PC-3 (cell line): ENCODE measurements at regions of chr16 and their contacts with region 1.

Region 1: DNA sequence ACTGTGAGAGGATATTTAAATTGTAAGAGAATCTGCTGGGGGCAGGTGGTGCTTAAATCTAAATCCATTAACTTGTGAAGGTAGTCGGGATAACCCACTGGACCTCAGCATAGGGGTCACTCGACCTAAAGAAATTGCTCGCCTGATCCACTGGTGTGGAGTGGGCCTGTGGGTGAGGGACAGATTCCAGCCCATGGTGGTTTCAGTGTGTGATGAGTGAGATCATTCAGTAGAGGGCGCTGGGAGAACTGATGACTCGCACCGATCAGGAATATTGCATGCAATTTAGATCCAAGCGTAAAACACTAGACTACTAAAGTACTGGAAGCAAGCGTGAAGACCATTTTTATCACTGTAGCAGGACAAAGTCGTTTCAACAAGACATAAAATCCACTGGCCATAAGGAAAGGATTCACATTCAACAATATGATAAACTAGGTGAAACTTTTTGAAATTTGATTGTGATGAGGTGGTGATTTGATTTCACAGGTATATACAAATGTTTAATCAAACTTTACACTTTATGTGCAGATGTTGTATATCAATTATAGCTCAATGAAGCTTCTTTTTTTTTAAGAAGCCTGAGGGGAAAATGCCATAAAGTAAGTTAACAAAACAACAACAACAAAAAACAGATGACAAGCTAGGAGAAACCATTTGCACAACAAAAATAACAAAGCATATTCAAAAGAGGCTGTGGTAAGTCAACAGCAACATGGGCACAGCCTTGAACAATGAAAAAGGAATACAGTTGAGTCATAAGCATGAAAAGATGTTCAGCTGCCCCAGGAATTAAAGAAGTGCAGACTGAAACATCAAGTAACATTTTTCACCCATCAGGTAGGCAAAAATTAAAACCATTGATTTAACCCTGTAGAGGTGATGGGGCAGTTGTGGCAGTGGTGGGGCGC is 7.5 kb upstream of the TMEM170A start:
- DNase-seq: peak; percentile 69
- ATAC-seq: peak; percentile 99
- H3K4me3 ChIP-seq: no peak overlapping the region
- H3K27ac ChIP-seq: no peak overlapping the region
- H3K4me1 ChIP-seq: peaks cover 5% of the 10 kb centered on the region
- H3K27me3 ChIP-seq: no peaks in the 10 kb centered on the region
- CTCF ChIP-seq: peak; percentile 83

Region 2: GRCh38 chr16:75342308-75342829 is 129.6 kb before region 1 on chr16:
- CTCF ChIA-PET with region 1: no interaction called
- POLR2A ChIA-PET with region 1: no interaction called
- intact Hi-C with region 1: no loop called
- DNase-seq: peak; percentile 88
- ATAC-seq: peak; percentile 95
- H3K4me3 ChIP-seq: no peak overlapping the region; the same call in 1 of the 2 replicates
- H3K27ac ChIP-seq: peak overlapping the region; percentile 85
- H3K4me1 ChIP-seq: peaks cover 40% of the 10 kb centered on the region
- H3K27me3 ChIP-seq: no peaks in the 10 kb centered on the region
- CTCF ChIP-seq: no peak

Region 3: DNA sequence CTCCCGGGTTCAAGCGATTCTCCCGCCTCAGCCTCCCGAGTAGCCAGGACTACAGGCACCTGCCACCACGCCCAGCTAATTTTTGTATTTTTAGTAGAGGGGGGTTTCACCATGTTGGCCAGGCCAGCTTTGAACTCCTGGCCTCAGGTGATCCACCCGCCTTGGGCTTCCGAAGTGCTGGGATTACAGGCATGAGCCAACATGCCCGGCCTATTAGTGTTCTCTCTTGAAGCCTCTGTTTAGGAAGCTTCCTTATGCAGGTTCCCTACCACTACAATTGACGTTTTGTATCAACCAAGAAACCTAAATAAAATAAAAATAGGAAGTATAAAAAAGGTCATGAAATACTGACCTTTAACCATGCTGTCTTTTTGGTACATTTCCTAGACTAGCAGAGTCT is 47.9 kb after region 1 on chr16:
- CTCF ChIA-PET with region 1: interaction called, 4 read pairs
- POLR2A ChIA-PET with region 1: no interaction called
- intact Hi-C with region 1: loop called (anchors 1 kb)
- DNase-seq: no peak
- ATAC-seq: no peak
- H3K4me3 ChIP-seq: no peak overlapping the region
- H3K27ac ChIP-seq: no peak overlapping the region
- H3K4me1 ChIP-seq: no peaks in the 10 kb centered on the region
- H3K27me3 ChIP-seq: no peaks in the 10 kb centered on the region
- CTCF ChIP-seq: no peak

Region 4: GRCh38 chr16:75566040-75566810 is 94.2 kb after region 1 on chr16 and contains the start of gene GABARAPL2:
- CTCF ChIA-PET with region 1: no interaction called
- POLR2A ChIA-PET with region 1: no interaction called
- intact Hi-C with region 1: loop called (anchors 5 kb)
- DNase-seq: peak; percentile 71
- ATAC-seq: peak; percentile 81
- H3K4me3 ChIP-seq: peak within 1 kb of the TSS; percentile 82
- H3K27ac ChIP-seq: no peak within 1 kb of the TSS
- H3K4me1 ChIP-seq: no peaks in the 10 kb centered on the region
- H3K27me3 ChIP-seq: no peaks in the 10 kb centered on the region
- CTCF ChIP-seq: no peak
- total RNA-seq, gene GABARAPL2: 24.7 and 31.2 TPM in 2 replicates